ENCODE measurements at regions of chr4 and their contacts with region 1.

Region 1: GRCh38 chr4:186201535-186202230 is 10.3 kb downstream of the CYP4V2 start:
- DNase-seq: peak; percentile 68 to 71
- H3K4me3 ChIP-seq: no peak overlapping the region
- H3K4me3 Mint-ChIP-seq: no peak overlapping the region
- H3K27ac Mint-ChIP-seq: no peak overlapping the region
- H3K4me1 ChIP-seq: no peaks in the 10 kb centered on the region; the same call in 1 of the 2 replicates
- H3K4me1 Mint-ChIP-seq: peaks cover 18% of the 10 kb centered on the region
- H3K27me3 ChIP-seq: no peaks in the 10 kb centered on the region
- H3K27me3 Mint-ChIP-seq: peaks cover 5% of the 10 kb centered on the region
- CTCF ChIP-seq: peak; percentile 77 to 86

Region 2: GRCh38 chr4:185242749-185243533 is 958.7 kb before region 1 on chr4:
- CTCF ChIA-PET with region 1: no interaction called
- POLR2A ChIA-PET with region 1: no interaction called
- intact Hi-C with region 1: no loop called
- DNase-seq: no peak
- H3K4me3 ChIP-seq: no peak overlapping the region
- H3K4me3 Mint-ChIP-seq: no peak overlapping the region
- H3K27ac Mint-ChIP-seq: no peak overlapping the region
- H3K4me1 ChIP-seq: no peaks in the 10 kb centered on the region
- H3K4me1 Mint-ChIP-seq: no peaks in the 10 kb centered on the region
- H3K27me3 ChIP-seq: no peaks in the 10 kb centered on the region
- H3K27me3 Mint-ChIP-seq: no peaks in the 10 kb centered on the region
- CTCF ChIP-seq: no peak

Region 3: GRCh38 chr4:186067757-186068385 is 133.8 kb before region 1 on chr4:
- CTCF ChIA-PET with region 1: interaction called, 9 read pairs
- POLR2A ChIA-PET with region 1: no interaction called
- intact Hi-C with region 1: loop called (anchors 1 kb)
- DNase-seq: peak; percentile 49 to 55
- H3K4me3 ChIP-seq: no peak overlapping the region
- H3K4me3 Mint-ChIP-seq: no peak overlapping the region
- H3K27ac Mint-ChIP-seq: no peak overlapping the region
- H3K4me1 ChIP-seq: no peaks in the 10 kb centered on the region
- H3K4me1 Mint-ChIP-seq: peaks cover 11% of the 10 kb centered on the region
- H3K27me3 ChIP-seq: no peaks in the 10 kb centered on the region
- H3K27me3 Mint-ChIP-seq: no peaks in the 10 kb centered on the region
- CTCF ChIP-seq: peak; percentile 34 to 52

Region 4: GRCh38 chr4:186191200-186192065 is 10.2 kb before region 1 on chr4 and contains the start of gene CYP4V2:
- CTCF ChIA-PET with region 1: no interaction called
- POLR2A ChIA-PET with region 1: no interaction called
- intact Hi-C with region 1: loop called (anchors 1 kb)
- DNase-seq: peak; percentile 67 to 74
- H3K4me3 ChIP-seq: peak within 1 kb of the TSS; percentile 70
- H3K4me3 Mint-ChIP-seq: peak within 1 kb of the TSS; percentile 80
- H3K27ac Mint-ChIP-seq: no peak within 1 kb of the TSS
- H3K4me1 ChIP-seq: peaks cover 10% of the 10 kb centered on the region; the same call in 1 of the 2 replicates
- H3K4me1 Mint-ChIP-seq: no peaks in the 10 kb centered on the region
- H3K27me3 ChIP-seq: no peaks in the 10 kb centered on the region; the same call in none of the 2 replicates
- H3K27me3 Mint-ChIP-seq: peaks cover 10% of the 10 kb centered on the region
- CTCF ChIP-seq: peak; percentile 16 to 28
- total RNA-seq, gene CYP4V2: 2.1 and 2.7 TPM in 2 replicates